ENCODE measurements at regions of chr5 and their contacts with region 1.

Region 1: GRCh38 chr5:128905571-128906110 is 59.6 kb upstream of the SLC27A6 start:
- DNase-seq: peak; percentile 68
- H3K4me3 ChIP-seq: no peak overlapping the region
- H3K27ac ChIP-seq: no peak overlapping the region
- H3K4me1 ChIP-seq: no peaks in the 10 kb centered on the region
- H3K27me3 ChIP-seq: no peaks in the 10 kb centered on the region
- CTCF ChIP-seq: peak; percentile 49 to 51
- POLR2A ChIP-seq: no peak

Region 2: DNA sequence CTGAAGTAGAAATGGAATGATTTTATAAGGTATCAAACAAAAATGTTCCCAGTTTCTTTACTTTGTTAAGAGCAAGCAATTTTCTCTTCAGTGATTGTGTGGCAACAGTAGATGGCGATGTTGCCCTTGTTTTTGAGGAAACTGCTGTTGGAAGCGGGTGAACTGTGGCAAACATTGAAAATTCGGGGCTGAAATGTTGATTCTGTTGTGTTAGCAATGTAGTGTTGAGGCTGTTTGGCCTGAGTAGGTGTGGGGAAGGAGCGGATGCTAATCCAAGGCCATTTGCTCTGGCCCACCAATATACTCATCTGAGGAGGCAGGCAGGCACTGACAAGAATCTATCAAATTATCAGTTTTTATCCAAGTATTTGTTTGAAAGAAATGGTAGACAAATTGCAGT is 692.3 kb before region 1 on chr5:
- CTCF ChIA-PET with region 1: interaction called, 10 read pairs
- POLR2A ChIA-PET with region 1: no interaction called
- dilution Hi-C with region 1: no loop called
- intact Hi-C with region 1: no loop called
- DNase-seq: peak; percentile 68
- H3K4me3 ChIP-seq: no peak overlapping the region
- H3K27ac ChIP-seq: no peak overlapping the region
- H3K4me1 ChIP-seq: no peaks in the 10 kb centered on the region
- H3K27me3 ChIP-seq: no peaks in the 10 kb centered on the region
- CTCF ChIP-seq: peak; percentile 63 to 73
- POLR2A ChIP-seq: no peak

Region 3: GRCh38 chr5:128920345-128921215 is 14.9 kb after region 1 on chr5:
- CTCF ChIA-PET with region 1: interaction called, 32 read pairs
- POLR2A ChIA-PET with region 1: no interaction called
- dilution Hi-C with region 1: no loop called
- intact Hi-C with region 1: no loop called
- DNase-seq: peak; percentile 90
- H3K4me3 ChIP-seq: no peak overlapping the region
- H3K27ac ChIP-seq: peak overlapping the region; percentile 87
- H3K4me1 ChIP-seq: peaks cover 15% of the 10 kb centered on the region
- H3K27me3 ChIP-seq: no peaks in the 10 kb centered on the region
- CTCF ChIP-seq: no peak
- POLR2A ChIP-seq: no peak

Region 4: GRCh38 chr5:129094087-129094923 is 188.7 kb after region 1 on chr5 and contains the start of gene ISOC1:
- CTCF ChIA-PET with region 1: interaction called, 20 read pairs
- POLR2A ChIA-PET with region 1: no interaction called
- dilution Hi-C with region 1: no loop called
- intact Hi-C with region 1: loop called (anchors 2 kb)
- DNase-seq: peak; percentile 93
- H3K4me3 ChIP-seq: peak within 1 kb of the TSS; percentile 71 to 93 (median 75)
- H3K27ac ChIP-seq: peak within 1 kb of the TSS; percentile 13
- H3K4me1 ChIP-seq: peaks cover 27% of the 10 kb centered on the region
- H3K27me3 ChIP-seq: peaks cover 0 to 2% of the 10 kb centered on the region in 2 experiments
- CTCF ChIP-seq: no peak
- POLR2A ChIP-seq: peak; percentile 83
- total RNA-seq, gene ISOC1: 20.7 and 21.4 TPM in 2 replicates

Region 5: DNA sequence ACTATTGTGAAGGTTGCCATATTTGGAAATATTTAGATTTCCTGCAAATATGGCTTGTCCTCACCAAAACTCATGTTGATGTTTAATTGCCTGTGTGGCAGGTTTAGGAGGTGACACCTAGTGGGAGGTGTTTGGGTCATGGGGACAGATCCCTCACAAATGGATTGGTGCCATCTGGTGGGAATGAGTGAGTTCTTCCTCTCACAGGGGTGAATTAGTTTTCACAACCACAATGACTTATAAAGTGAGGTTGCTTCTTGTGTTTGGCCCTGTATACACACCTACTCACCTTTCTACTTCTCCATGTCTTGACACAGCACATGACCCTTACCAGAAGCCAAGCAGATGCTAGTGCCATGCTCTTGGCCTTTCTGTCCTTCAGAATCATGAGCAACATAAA is 230.0 kb after region 1 on chr5:
- CTCF ChIA-PET with region 1: interaction called, 19 read pairs
- POLR2A ChIA-PET with region 1: no interaction called
- dilution Hi-C with region 1: no loop called
- intact Hi-C with region 1: loop called (anchors 2 kb)
- DNase-seq: no peak
- H3K4me3 ChIP-seq: no peak overlapping the region
- H3K27ac ChIP-seq: no peak overlapping the region
- H3K4me1 ChIP-seq: no peaks in the 10 kb centered on the region
- H3K27me3 ChIP-seq: no peaks in the 10 kb centered on the region
- CTCF ChIP-seq: peak in 1 of 2 donors; percentile 9
- POLR2A ChIP-seq: no peak

Region 6: DNA sequence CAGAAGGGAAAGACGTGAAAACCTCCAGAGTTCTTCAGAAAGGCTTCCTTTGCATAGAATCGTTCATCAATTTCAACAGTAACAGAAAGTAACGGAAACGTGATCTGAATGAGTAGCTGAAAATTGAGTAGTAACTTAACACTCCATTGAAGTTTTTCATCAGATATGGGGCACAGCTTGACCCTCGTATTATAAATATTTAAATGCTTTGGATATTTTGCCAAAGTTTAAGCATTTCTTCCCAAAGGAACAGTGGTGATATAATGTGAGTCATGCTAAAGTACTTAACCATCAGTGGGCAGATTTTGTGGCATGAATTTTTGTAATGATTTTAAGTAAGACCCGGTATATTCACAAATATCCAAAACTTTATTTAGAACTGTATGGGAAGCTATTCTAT is 487.0 kb after region 1 on chr5:
- CTCF ChIA-PET with region 1: no interaction called
- POLR2A ChIA-PET with region 1: no interaction called
- dilution Hi-C with region 1: no loop called
- intact Hi-C with region 1: loop called (anchors 5 kb)
- DNase-seq: no peak
- H3K4me3 ChIP-seq: no peak overlapping the region
- H3K27ac ChIP-seq: no peak overlapping the region
- H3K4me1 ChIP-seq: no peaks in the 10 kb centered on the region
- H3K27me3 ChIP-seq: no peaks in the 10 kb centered on the region
- CTCF ChIP-seq: no peak
- POLR2A ChIP-seq: no peak

Region 7: DNA sequence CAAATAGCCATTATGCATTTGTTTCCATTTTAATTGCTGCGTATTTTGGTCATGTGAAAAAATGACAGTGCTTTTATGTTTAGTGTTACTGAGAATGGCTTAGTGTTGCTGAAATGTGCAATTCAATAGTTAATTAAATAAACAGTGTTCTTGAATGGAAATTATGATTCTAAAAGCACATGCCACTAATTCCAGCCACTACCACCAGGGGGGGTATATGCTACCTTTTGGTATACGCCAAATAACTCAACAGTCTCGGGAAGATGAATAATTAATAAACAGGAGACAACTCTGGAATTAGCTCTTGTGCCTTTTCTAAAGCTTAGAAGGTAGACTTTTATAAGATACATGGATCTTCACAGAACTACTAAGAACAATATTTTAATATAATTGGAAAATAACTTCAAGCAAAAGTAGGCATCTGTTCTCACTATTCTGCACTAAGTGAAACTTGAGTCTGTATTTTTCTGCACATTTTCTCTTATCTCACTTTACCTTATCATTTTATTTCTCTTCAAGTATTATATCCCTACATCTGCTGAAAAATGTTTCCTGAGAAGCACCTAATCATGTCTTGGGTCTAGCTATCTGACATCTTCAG is 758.8 kb after region 1 on chr5:
- CTCF ChIA-PET with region 1: interaction called, 9 read pairs
- POLR2A ChIA-PET with region 1: no interaction called
- dilution Hi-C with region 1: no loop called
- intact Hi-C with region 1: loop called (anchors 5 kb)
- DNase-seq: peak; percentile 80
- H3K4me3 ChIP-seq: no peak overlapping the region
- H3K27ac ChIP-seq: no peak overlapping the region
- H3K4me1 ChIP-seq: no peaks in the 10 kb centered on the region
- H3K27me3 ChIP-seq: no peaks in the 10 kb centered on the region
- CTCF ChIP-seq: peak; percentile 73 to 74
- POLR2A ChIP-seq: no peak

Measured in endothelial cell of umbilical vein (primary cell).